HepG2 (cell line): ENCODE measurements at regions of chr14 and their contacts with region 1.

Region 1: GRCh38 chr14:22929104-22929847 is at the start of gene PRMT5:
- DNase-seq: peak; percentile 100
- ATAC-seq: peak; percentile 98
- H3K4me3 ChIP-seq: peak within 1 kb of the TSS; percentile 77 to 98 (median 92)
- H3K27ac ChIP-seq: peak within 1 kb of the TSS; percentile 78
- H3K4me1 ChIP-seq: peaks cover 27% of the 10 kb centered on the region
- H3K27me3 ChIP-seq: no peaks in the 10 kb centered on the region; a peak in 1 of 5 replicates
- CTCF ChIP-seq: peak; percentile 60
- EP300 ChIP-seq: peak; percentile 56 to 82; a peak in 3 of 4 replicates
- POLR2A ChIP-seq: peak; percentile 96 to 98
- RAD21 ChIP-seq: peak; percentile 74
- total RNA-seq, gene PRMT5: 210 and 289 TPM in 2 replicates

Region 2: GRCh38 chr14:22861651-22862050 is 67.6 kb before region 1 on chr14:
- CTCF ChIA-PET with region 1: no interaction called
- POLR2A ChIA-PET with region 1: no interaction called
- in situ Hi-C with region 1: no loop called
- intact Hi-C with region 1: no loop called
- DNase-seq: peak; percentile 41
- ATAC-seq: peak; percentile 87
- H3K4me3 ChIP-seq: no peak overlapping the region
- H3K27ac ChIP-seq: no peak overlapping the region
- H3K4me1 ChIP-seq: peaks cover 26% of the 10 kb centered on the region
- H3K27me3 ChIP-seq: no peaks in the 10 kb centered on the region
- CTCF ChIP-seq: no peak
- EP300 ChIP-seq: no peak
- POLR2A ChIP-seq: no peak
- RAD21 ChIP-seq: no peak

Region 3: GRCh38 chr14:22872033-22872832 is 57.0 kb before region 1 on chr14:
- CTCF ChIA-PET with region 1: interaction called, 11 read pairs
- POLR2A ChIA-PET with region 1: interaction called, 43 read pairs
- in situ Hi-C with region 1: no loop called
- intact Hi-C with region 1: loop called (anchors 1 kb)
- DNase-seq: peak; percentile 84
- ATAC-seq: peak; percentile 62
- H3K4me3 ChIP-seq: peak overlapping the region; percentile 66 to 93 (median 82)
- H3K27ac ChIP-seq: peak overlapping the region; percentile 85
- H3K4me1 ChIP-seq: peaks cover 35% of the 10 kb centered on the region
- H3K27me3 ChIP-seq: no peaks in the 10 kb centered on the region; a peak in 1 of 5 replicates
- CTCF ChIP-seq: peak; percentile 99
- EP300 ChIP-seq: peak in 1 of 2 experiments; percentile 54; a peak in 2 of 4 replicates
- POLR2A ChIP-seq: no peak
- RAD21 ChIP-seq: peak; percentile 68

Region 4: GRCh38 chr14:22900081-22900799 is 29.0 kb before region 1 on chr14:
- CTCF ChIA-PET with region 1: no interaction called
- POLR2A ChIA-PET with region 1: interaction called, 44 read pairs
- in situ Hi-C with region 1: no loop called
- intact Hi-C with region 1: loop called (anchors 1 kb)
- DNase-seq: peak; percentile 83
- ATAC-seq: peak; percentile 39
- H3K4me3 ChIP-seq: no peak overlapping the region
- H3K27ac ChIP-seq: no peak overlapping the region
- H3K4me1 ChIP-seq: peaks cover 45% of the 10 kb centered on the region
- H3K27me3 ChIP-seq: peaks cover 4 to 6% of the 10 kb centered on the region in 2 experiments; a peak in 2 of 5 replicates
- CTCF ChIP-seq: peak; percentile 87
- EP300 ChIP-seq: no peak
- POLR2A ChIP-seq: no peak
- RAD21 ChIP-seq: peak; percentile 56; the same call in 1 of the 2 replicates

Region 5: DNA sequence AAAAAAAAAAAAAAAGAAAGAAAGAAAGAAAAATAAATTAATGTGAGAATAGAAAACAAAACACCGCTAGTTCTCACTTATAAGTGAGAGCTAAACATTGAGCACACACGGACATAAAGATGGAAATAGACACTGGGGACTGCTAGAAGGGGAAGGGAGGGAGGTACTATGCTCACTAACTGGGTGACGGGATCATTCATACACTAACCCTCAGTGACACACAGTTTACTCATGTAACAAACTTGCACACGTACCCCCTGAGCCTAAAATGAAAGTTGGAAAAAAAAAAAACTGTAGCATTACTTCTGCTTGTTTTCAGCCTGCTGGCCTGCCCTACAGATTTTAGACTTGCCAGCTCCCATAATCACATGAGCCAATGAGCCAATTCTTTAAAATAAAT is 10.4 kb after region 1 on chr14:
- CTCF ChIA-PET with region 1: interaction called, 3 read pairs
- POLR2A ChIA-PET with region 1: interaction called, 21 read pairs
- in situ Hi-C with region 1: no loop called
- intact Hi-C with region 1: loop called (anchors 1 kb)
- DNase-seq: no peak
- ATAC-seq: no peak
- H3K4me3 ChIP-seq: no peak overlapping the region
- H3K27ac ChIP-seq: no peak overlapping the region
- H3K4me1 ChIP-seq: no peaks in the 10 kb centered on the region
- H3K27me3 ChIP-seq: no peaks in the 10 kb centered on the region
- CTCF ChIP-seq: no peak
- EP300 ChIP-seq: no peak
- POLR2A ChIP-seq: no peak
- RAD21 ChIP-seq: no peak

Region 6: DNA sequence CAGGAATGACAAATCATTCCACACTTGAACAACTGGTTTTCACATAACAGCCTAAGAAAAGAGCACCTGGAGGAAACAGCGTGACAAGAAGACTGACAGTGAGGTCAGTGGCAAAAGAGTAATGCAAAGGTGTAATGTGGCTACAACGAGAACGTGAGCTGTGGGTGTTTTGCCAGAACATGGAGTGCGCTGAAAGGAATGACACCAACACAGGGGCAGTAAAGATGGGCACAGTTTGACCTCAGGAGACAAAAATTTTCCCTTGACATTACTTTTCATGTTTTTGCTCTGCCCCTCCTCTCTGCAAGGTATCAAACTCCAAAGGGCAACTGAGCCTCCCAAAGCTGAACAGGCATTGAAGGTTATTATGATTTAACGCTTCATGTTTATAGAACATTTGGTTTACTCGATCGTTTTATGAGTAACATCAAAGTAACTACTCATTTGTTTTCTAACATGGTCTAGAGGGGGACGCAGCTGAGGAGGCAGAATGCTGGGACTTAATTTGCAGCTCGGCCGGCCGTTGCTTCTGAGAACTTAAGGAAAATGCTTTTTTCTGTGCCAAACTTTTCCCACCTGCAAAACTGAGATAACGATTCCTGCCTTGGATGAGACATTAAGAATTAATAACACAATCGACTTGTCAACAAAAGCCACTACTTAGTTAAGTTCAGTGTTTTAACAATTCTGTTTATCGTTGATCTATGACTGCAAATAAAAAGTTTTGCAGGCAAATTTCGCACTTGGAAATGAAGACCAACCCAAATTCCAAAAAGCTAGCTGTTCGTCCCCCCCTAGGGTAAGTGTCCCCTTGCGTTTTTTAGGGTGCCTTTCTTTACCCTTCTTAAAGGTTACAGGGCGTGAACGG is 26.7 kb after region 1 on chr14:
- CTCF ChIA-PET with region 1: interaction called, 7 read pairs
- POLR2A ChIA-PET with region 1: interaction called, 85 read pairs
- in situ Hi-C with region 1: no loop called
- intact Hi-C with region 1: loop called (anchors 1 kb)
- DNase-seq: peak; percentile 48
- ATAC-seq: peak; percentile 27
- H3K4me3 ChIP-seq: peak overlapping the region; percentile 73 to 78 (median 77)
- H3K27ac ChIP-seq: peak overlapping the region; percentile 78
- H3K4me1 ChIP-seq: peaks cover 47% of the 10 kb centered on the region
- H3K27me3 ChIP-seq: no peaks in the 10 kb centered on the region; a peak in 1 of 5 replicates
- CTCF ChIP-seq: no peak
- EP300 ChIP-seq: peak in 1 of 2 experiments; percentile 25; a peak in 1 of 4 replicates
- POLR2A ChIP-seq: no peak
- RAD21 ChIP-seq: no peak

Region 7: DNA sequence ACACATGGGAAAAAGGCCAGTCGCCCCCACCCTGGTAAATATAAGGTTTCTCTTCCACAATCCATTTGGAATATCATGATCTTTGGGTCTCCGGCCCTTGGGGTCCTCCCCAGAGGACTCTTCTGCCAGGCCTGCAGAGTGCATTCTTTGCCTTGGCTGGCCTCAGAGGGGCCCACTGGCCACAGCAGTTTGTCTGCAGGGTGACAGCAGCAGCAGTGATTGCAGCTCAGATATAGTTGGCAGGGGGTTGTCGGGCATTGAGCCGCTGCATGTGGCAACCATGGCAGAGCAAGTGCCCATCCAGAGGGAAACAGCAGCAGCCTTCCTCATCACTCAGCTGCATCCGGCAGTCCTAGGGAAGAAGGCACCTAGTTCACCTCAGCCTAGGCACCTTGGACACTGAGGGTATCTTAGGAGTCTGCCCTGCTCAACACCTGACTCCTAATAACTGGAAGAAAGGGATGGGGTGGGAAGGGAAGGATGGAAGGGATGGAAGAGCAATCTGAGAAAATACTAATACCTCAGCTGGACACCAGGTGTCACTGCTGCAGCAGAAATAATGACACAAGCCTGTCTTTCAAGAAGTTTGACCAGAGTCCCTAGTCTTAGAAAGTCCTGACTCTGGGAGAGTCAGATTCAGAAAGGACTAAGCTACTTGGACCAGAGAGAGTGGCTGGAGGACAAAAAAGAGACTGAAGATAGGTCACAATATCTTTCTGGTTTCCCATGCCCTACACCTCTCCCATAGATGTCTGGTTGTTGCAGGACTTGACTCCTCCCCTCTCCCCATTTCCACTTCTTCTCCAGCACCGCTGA is 44.1 kb after region 1 on chr14:
- CTCF ChIA-PET with region 1: no interaction called
- POLR2A ChIA-PET with region 1: interaction called, 136 read pairs
- in situ Hi-C with region 1: no loop called
- intact Hi-C with region 1: loop called (anchors 2 kb)
- DNase-seq: peak; percentile 82
- ATAC-seq: no peak
- H3K4me3 ChIP-seq: no peak overlapping the region
- H3K27ac ChIP-seq: peak overlapping the region; percentile 97
- H3K4me1 ChIP-seq: peaks cover 65% of the 10 kb centered on the region
- H3K27me3 ChIP-seq: no peaks in the 10 kb centered on the region
- CTCF ChIP-seq: no peak
- EP300 ChIP-seq: no peak
- POLR2A ChIP-seq: peak in 1 of 2 experiments; percentile 73; a peak in 2 of 4 replicates
- RAD21 ChIP-seq: peak; percentile 97